ENCODE measurements at regions of chr12 and their contacts with region 1.

Region 1: DNA sequence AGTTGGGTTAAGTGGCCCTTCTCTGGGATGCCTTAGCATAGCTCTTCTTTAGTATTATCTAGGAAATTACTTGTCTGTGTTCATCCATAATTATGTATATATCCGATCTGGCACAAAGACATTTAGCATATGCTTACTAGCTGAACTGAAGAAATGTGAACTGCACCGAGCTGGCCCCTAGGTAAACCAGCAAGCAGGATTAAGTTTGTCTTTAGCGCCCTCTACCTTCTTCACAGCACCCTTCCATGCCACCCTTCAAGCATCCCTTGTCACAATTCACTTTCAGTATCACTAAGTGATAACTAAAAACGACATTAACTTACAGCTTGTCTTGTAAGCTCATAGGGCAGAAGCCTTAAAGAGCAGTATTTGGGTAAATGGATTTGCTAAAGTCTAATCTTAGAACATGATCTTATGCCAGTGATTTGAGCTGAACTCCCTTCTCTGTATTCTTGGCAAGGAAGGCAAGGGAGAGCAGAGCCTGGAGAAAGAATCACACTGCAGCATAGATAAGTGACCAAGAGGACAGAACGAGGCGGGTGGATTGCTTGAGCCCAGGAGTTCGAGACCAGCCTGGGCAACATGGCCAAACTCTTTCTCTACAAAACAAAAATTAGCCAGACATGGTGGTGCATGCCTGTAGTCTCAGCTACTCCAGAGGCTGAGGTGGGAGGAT is 2.6 kb upstream of the HAL start:
- DNase-seq: peak; percentile 73
- ATAC-seq: peak; percentile 99
- H3K4me3 Mint-ChIP-seq: no peak overlapping the region
- H3K27ac Mint-ChIP-seq: no peak overlapping the region
- H3K4me1 Mint-ChIP-seq: peaks cover 6% of the 10 kb centered on the region
- H3K27me3 Mint-ChIP-seq: no peaks in the 10 kb centered on the region

Region 2: DNA sequence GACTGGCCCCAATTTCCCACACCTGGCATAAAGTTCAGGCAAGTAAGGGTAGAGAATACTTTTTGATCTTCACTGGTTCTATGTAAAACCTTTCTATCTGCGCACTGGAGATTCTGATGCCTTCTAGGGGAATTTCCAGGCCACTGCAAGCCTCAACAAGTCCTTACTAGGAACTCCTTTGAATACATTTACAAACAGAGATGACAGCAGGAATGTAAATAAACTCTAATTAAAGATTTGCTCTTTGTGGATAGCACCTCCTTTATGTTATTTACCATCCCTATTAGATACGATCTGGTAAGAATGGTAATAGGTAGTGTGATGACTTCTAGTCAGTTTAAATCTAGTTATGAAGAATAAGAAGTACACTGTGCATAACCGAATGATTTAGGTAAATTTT is 277.4 kb before region 1 on chr12:
- CTCF ChIA-PET with region 1: no interaction called
- POLR2A ChIA-PET with region 1: no interaction called
- DNase-seq: no peak
- ATAC-seq: no peak
- H3K4me3 Mint-ChIP-seq: no peak overlapping the region
- H3K27ac Mint-ChIP-seq: no peak overlapping the region
- H3K4me1 Mint-ChIP-seq: no peaks in the 10 kb centered on the region
- H3K27me3 Mint-ChIP-seq: peaks cover 11% of the 10 kb centered on the region

Region 3: GRCh38 chr12:95918194-95918993 is 80.4 kb before region 1 on chr12:
- CTCF ChIA-PET with region 1: interaction called, 79 read pairs
- POLR2A ChIA-PET with region 1: no interaction called
- DNase-seq: peak; percentile 63
- ATAC-seq: peak; percentile 96
- H3K4me3 Mint-ChIP-seq: no peak overlapping the region
- H3K27ac Mint-ChIP-seq: no peak overlapping the region
- H3K4me1 Mint-ChIP-seq: no peaks in the 10 kb centered on the region
- H3K27me3 Mint-ChIP-seq: peaks cover 12% of the 10 kb centered on the region

Region 4: DNA sequence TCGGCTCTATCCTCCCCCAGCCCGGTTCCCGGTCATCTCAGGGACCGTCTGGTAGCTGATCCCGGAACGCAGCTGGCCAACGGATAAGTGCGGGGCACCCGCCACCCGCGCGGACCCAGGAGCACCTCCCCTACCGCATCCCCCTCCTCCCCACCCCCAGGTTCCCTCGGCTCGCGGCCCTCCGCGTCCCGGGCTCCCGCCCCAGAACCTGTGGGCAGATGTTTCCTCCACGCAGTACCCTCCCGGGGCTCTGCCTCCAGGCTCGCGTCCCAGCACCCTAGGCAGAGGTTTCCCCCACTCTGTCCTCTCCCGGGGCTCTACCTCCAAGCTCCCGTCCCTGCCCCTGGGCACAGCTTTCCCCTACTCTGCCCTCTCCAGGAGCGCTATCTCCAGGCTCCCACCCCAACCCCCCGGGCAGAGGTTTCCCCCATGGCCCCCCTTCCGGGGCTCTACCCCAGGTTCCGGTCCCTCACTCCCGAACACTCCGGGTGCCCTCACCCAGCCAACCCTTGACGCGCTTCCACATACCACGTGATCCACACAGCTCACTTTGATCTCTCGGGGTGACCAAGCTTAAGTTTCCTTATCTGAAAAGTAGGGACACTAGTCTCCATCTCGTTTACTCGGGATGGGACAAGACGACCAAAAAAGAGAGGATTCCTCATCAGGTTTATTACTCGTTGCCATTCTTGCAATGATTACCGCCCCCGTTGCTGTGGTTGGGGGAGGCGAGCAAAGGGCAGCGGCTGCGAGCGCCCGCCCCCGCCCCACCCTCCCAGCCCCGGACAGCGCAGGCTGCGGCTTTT is 56.0 kb before region 1 on chr12 and contains the start of gene CCDC38:
- CTCF ChIA-PET with region 1: interaction called, 19 read pairs
- POLR2A ChIA-PET with region 1: interaction called, 5 read pairs
- DNase-seq: peak; percentile 90
- ATAC-seq: peak; percentile 97
- H3K4me3 Mint-ChIP-seq: peak within 1 kb of the TSS; percentile 84
- H3K27ac Mint-ChIP-seq: peak within 1 kb of the TSS; percentile 84
- H3K4me1 Mint-ChIP-seq: peaks cover 10% of the 10 kb centered on the region
- H3K27me3 Mint-ChIP-seq: peaks cover 13% of the 10 kb centered on the region
- total RNA-seq, gene CCDC38: not detected

Region 5: DNA sequence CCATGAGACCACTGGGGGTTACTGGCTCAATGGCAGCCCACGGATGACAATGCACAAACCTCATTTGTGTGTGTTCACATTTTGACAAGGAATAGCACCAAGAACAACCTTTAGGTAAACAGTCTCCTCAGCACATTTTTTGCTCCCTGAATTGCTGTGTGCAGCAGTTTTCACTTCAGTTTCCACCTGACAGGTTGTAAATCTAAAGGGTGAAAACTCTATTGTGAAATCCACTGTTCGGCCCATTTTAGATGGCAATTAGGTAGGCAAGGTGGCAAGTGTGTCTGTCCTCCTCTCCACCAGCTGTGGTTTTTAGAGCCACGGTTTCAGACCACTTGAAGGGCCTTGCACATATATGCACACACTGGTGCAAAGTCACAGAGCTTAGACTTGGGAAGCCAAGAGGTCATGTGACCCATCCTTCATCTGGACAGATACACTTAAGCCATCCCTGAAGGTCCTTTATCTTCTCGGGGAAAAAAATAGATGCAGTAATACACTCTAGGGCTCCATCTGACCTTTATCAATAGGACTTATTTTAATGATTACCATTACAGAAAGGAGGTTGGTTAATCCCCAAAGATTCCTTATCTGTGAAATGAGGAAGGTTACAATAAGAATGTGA is 25.8 kb before region 1 on chr12:
- CTCF ChIA-PET with region 1: no interaction called
- POLR2A ChIA-PET with region 1: no interaction called
- DNase-seq: no peak
- ATAC-seq: no peak
- H3K4me3 Mint-ChIP-seq: no peak overlapping the region
- H3K27ac Mint-ChIP-seq: no peak overlapping the region
- H3K4me1 Mint-ChIP-seq: no peaks in the 10 kb centered on the region
- H3K27me3 Mint-ChIP-seq: no peaks in the 10 kb centered on the region

Region 6: DNA sequence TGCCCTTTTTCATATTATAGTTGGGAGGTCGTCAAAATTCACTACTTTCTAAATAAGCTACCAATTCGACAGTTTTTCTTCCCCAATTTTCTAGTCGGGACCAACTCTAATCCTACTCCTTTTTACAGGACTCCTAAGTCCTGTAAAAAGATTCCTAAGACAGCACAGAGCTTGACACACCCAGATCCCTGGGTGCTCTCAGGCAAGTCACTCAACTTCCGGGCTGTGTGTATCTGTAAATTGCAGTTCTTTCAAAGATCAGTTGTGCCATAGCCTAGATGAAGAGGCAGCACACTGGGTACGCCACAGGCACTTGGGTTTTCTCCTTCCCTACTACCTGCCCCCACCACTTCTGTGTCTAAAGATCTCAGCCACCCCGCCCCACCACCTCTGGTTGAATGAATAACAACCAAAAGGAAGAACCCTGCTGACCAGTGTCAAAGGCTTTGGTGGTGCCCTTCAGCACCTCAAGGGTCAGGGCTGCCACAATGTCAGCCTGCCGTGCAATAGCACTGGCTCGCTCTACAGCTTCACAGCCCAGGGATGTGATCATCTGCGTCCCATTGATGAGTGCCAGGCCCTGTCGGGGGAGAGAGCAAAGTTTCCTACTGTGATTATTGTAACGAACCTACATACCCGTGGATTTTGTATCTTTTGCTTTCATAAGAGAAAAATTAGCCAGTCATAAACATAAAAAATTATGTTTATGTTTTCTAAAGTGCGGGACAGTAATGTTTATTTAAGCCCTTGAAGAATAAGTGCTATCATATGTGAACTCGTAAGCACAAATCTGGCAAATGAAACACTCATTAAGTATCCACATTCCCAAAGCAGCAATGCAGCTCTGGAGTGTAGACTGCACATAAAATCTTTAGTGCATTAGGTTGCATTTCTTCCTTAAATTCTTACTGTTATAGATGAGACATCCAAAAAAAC is 11.8 kb before region 1 on chr12:
- CTCF ChIA-PET with region 1: interaction called, 27 read pairs
- POLR2A ChIA-PET with region 1: no interaction called
- DNase-seq: no peak
- ATAC-seq: no peak
- H3K4me3 Mint-ChIP-seq: no peak overlapping the region
- H3K27ac Mint-ChIP-seq: no peak overlapping the region
- H3K4me1 Mint-ChIP-seq: no peaks in the 10 kb centered on the region
- H3K27me3 Mint-ChIP-seq: peaks cover 3% of the 10 kb centered on the region

Region 7: GRCh38 chr12:96015672-96016071 is 16.9 kb after region 1 on chr12:
- CTCF ChIA-PET with region 1: interaction called, 17 read pairs
- POLR2A ChIA-PET with region 1: interaction called, 5 read pairs
- DNase-seq: no peak
- ATAC-seq: no peak
- H3K4me3 Mint-ChIP-seq: no peak overlapping the region
- H3K27ac Mint-ChIP-seq: no peak overlapping the region
- H3K4me1 Mint-ChIP-seq: no peaks in the 10 kb centered on the region
- H3K27me3 Mint-ChIP-seq: no peaks in the 10 kb centered on the region

Region 8: GRCh38 chr12:96153131-96153725 is 154.5 kb after region 1 on chr12:
- CTCF ChIA-PET with region 1: no interaction called
- POLR2A ChIA-PET with region 1: no interaction called
- DNase-seq: no peak
- ATAC-seq: no peak
- H3K4me3 Mint-ChIP-seq: no peak overlapping the region
- H3K27ac Mint-ChIP-seq: no peak overlapping the region
- H3K4me1 Mint-ChIP-seq: no peaks in the 10 kb centered on the region
- H3K27me3 Mint-ChIP-seq: no peaks in the 10 kb centered on the region